B cell (primary cell): ENCODE measurements at regions of chr11 and their contacts with region 1.

Region 1: GRCh38 chr11:58567889-58568512 is 7.7 kb downstream of the LPXN start:
- DNase-seq: peak; percentile 87
- ATAC-seq: peak; percentile 98
- H3K4me3 ChIP-seq: no peak overlapping the region
- H3K4me3 Mint-ChIP-seq: peak overlapping the region; percentile 1
- H3K27ac ChIP-seq: no peak overlapping the region
- H3K27ac Mint-ChIP-seq: peak overlapping the region; percentile 5
- H3K4me1 ChIP-seq: peaks cover 19 to 21% of the 10 kb centered on the region in 2 donors
- H3K4me1 Mint-ChIP-seq: peaks cover 42% of the 10 kb centered on the region
- H3K27me3 ChIP-seq: no peaks in the 10 kb centered on the region
- H3K27me3 Mint-ChIP-seq: no peaks in the 10 kb centered on the region
- CTCF ChIP-seq: peak; percentile 82

Region 2: DNA sequence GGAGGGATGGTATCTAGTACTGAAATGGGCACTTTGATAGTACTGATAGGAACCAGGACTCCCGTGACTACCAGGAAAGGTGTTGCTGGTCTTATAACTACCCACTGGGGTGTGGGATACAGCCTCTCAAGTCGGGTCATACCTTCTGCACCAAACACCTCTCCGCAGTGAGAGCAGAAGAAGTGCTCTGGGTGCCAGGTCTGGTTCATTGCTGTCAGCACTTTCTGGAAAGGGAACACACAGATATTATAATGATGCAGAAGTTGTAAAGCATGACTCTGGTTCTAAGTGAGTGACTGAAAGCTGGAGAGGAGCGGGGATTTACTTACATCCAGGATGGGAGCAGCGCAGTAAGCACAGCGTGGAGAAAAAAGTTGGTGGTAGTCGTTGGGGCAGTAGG is 18.4 kb before region 1 on chr11:
- CTCF ChIA-PET with region 1: interaction called, 26 read pairs
- POLR2A ChIA-PET with region 1: no interaction called
- intact Hi-C with region 1: no loop called
- DNase-seq: no peak
- ATAC-seq: no peak
- H3K4me3 ChIP-seq: no peak overlapping the region
- H3K4me3 Mint-ChIP-seq: no peak overlapping the region
- H3K27ac ChIP-seq: no peak overlapping the region
- H3K27ac Mint-ChIP-seq: no peak overlapping the region
- H3K4me1 ChIP-seq: no peaks in the 10 kb centered on the region
- H3K4me1 Mint-ChIP-seq: no peaks in the 10 kb centered on the region
- H3K27me3 ChIP-seq: no peaks in the 10 kb centered on the region
- H3K27me3 Mint-ChIP-seq: no peaks in the 10 kb centered on the region
- CTCF ChIP-seq: no peak

Region 3: DNA sequence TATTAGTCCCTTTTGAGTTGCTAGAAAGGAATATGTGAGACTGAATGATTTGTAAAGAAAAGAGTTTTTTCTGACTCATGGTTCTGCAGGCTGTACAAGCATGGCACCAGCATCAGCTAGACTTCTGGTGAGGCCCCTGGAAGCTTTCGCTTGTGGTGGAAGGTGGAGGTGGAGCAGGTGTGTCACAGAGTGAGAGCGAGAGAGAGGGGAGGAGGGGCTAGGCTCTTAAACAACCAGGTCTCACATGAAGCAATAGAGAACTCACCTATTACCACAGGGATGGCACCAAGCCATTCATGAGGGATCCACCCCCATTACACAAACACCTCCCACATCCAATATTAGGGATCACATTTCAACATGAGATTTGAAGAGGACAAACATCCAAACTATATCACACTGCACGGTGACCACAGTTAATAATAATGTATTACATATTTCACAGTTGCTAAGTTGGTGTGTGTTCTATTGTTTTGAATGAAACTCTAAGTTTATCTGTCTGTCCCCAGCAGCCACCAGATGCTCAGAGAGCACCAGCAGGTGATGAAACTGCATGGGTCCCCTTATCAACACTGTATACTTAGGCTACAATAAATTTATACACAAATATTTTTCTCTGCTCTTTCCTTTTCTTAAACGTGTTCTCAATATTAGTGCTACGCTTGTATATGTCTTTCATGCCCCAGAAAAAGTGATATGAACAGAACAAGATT is 24.9 kb after region 1 on chr11:
- CTCF ChIA-PET with region 1: interaction called, 25 read pairs
- POLR2A ChIA-PET with region 1: no interaction called
- intact Hi-C with region 1: no loop called
- DNase-seq: no peak
- ATAC-seq: no peak
- H3K4me3 ChIP-seq: no peak overlapping the region
- H3K4me3 Mint-ChIP-seq: no peak overlapping the region
- H3K27ac ChIP-seq: no peak overlapping the region
- H3K27ac Mint-ChIP-seq: no peak overlapping the region
- H3K4me1 ChIP-seq: peaks cover 3 to 6% of the 10 kb centered on the region in 2 donors
- H3K4me1 Mint-ChIP-seq: peaks cover 35% of the 10 kb centered on the region
- H3K27me3 ChIP-seq: no peaks in the 10 kb centered on the region
- H3K27me3 Mint-ChIP-seq: no peaks in the 10 kb centered on the region
- CTCF ChIP-seq: no peak

Region 4: GRCh38 chr11:58616594-58616993 is 48.6 kb after region 1 on chr11:
- CTCF ChIA-PET with region 1: interaction called, 21 read pairs
- POLR2A ChIA-PET with region 1: no interaction called
- intact Hi-C with region 1: loop called (anchors 2 kb)
- DNase-seq: no peak
- ATAC-seq: no peak
- H3K4me3 ChIP-seq: no peak overlapping the region
- H3K4me3 Mint-ChIP-seq: no peak overlapping the region
- H3K27ac ChIP-seq: no peak overlapping the region
- H3K27ac Mint-ChIP-seq: no peak overlapping the region
- H3K4me1 ChIP-seq: no peaks in the 10 kb centered on the region
- H3K4me1 Mint-ChIP-seq: no peaks in the 10 kb centered on the region
- H3K27me3 ChIP-seq: no peaks in the 10 kb centered on the region
- H3K27me3 Mint-ChIP-seq: no peaks in the 10 kb centered on the region
- CTCF ChIP-seq: no peak